Posterior vena cava (tissue), 2 donors: ENCODE measurements at regions of chr12 and their contacts with region 1.

Region 1: DNA sequence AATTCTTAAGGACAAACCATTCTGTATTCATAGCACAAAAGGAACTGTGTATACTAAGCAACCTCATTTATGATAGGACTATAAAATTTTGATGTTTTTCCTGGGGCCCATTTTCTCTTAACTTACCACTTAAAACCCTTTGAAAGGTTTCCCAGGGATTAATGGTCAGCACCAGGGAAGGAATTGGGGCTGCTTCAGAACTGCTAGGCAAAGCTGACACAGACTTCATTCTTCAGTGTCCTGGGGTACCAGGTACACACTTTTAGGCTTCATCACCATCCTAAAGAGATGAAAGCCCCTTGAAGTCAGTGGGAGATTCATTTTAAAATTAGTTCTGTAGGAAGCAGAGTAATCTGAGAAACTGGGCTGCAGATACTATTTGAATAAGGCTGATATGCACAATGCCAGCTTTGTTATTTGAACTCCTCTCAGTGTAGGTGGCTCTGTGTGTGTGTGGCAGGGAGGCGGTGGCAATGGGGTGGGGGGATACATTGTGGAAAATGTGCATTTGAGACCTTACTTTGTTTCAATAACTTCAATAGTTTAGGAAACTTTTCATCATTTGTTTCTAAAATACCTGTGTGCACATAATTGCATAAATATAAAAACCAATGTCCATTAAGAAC is 329.3 kb upstream of the DCN start:
- DNase-seq: no peak

Region 2: DNA sequence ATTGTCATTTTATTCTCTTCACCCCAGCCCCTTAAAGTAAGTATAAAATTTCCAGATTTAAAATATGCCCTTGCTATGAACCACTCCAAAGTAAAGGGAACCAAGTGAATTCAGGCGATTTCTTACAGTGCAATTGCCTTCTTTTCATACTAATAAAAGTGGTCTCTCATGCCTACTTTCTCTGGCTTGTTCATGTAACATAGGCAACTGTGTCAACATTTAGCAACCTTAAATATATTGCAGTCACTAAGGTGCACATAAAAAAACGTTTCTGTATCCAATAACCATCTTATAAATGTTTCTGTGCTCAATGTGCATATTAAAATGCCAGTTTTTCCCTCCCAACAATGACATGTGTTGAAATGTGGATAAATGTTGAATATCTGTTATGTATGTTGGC is 57.7 kb before region 1 on chr12:
- intact Hi-C with region 1: loop called in 1 of 2 experiments (anchors 2 kb)
- DNase-seq: no peak

Region 3: DNA sequence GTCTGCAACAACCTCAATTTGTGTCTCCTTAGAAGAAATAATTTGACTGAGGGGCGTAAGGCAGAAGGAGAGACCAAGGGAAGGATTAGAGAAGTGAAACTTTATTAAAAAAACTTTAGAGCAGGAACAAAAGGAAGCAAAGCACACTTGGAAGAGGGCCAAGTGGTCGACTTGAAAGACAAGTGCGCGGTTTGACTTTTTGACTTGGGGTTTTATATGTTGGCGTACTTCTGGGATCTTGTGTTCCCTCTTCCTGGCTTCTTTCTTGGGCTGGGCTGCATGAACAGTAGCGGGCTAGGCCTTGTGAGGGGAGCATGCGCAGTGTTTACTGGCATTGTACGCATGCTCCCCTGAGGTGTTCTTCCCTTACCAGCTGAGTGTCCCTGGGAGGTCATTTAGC is 40.0 kb after region 1 on chr12:
- intact Hi-C with region 1: loop called in 1 of 2 experiments (anchors 1 kb)
- DNase-seq: no peak